CD8-positive, alpha-beta T cell (primary cell): ENCODE measurements at regions of chr18 and their contacts with region 1.

Region 1: DNA sequence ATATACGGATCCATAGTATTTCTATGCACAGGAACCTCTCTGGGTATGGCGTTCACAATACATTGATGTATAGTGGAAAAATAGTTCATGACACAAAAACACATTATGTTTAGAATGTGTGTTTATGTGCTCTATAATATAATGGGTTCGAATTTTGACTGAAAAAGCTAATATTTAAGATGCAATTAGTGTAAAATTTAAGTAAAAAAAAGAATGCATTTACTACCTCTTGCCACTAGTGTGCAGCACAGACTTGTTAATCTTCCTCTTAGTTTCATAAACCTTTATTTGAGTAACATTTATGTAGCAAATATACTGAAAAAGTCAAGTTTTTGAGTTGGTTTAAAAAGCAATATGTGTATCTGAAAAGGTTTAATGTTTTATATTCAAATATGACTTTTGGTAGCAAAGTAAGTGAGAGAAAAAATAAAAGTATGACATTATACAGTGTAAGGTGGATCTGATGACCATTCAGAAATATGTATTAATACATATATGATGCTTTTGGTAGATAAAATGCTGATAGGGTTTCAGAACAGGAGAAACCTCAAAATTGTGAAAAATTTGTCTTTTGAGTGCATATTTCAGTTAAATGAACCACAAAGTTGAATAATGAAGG is 49.4 kb downstream of the CCDC102B start:
- DNase-seq: peak in 2 of 9 experiments; percentile 8 to 29
- ATAC-seq: no peak
- H3K4me3 ChIP-seq: no peak overlapping the region
- H3K4me3 Mint-ChIP-seq: no peak overlapping the region
- H3K27ac ChIP-seq: no peak overlapping the region
- H3K27ac Mint-ChIP-seq: no peak overlapping the region
- H3K4me1 ChIP-seq: no peaks in the 10 kb centered on the region
- H3K4me1 Mint-ChIP-seq: no peaks in the 10 kb centered on the region
- H3K27me3 ChIP-seq: no peaks in the 10 kb centered on the region
- H3K27me3 Mint-ChIP-seq: no peaks in the 10 kb centered on the region
- CTCF ChIP-seq: peak; percentile 70

Region 2: GRCh38 chr18:68865021-68865420 is 17.7 kb after region 1 on chr18:
- CTCF ChIA-PET with region 1: no interaction called
- POLR2A ChIA-PET with region 1: no interaction called
- intact Hi-C with region 1: no loop called
- DNase-seq: no peak
- ATAC-seq: no peak
- H3K4me3 ChIP-seq: no peak overlapping the region
- H3K4me3 Mint-ChIP-seq: no peak overlapping the region
- H3K27ac ChIP-seq: no peak overlapping the region
- H3K27ac Mint-ChIP-seq: no peak overlapping the region
- H3K4me1 ChIP-seq: no peaks in the 10 kb centered on the region
- H3K4me1 Mint-ChIP-seq: no peaks in the 10 kb centered on the region
- H3K27me3 ChIP-seq: no peaks in the 10 kb centered on the region
- H3K27me3 Mint-ChIP-seq: no peaks in the 10 kb centered on the region
- CTCF ChIP-seq: no peak

Region 3: GRCh38 chr18:70431203-70431624 is 1583.9 kb after region 1 on chr18:
- CTCF ChIA-PET with region 1: no interaction called
- POLR2A ChIA-PET with region 1: no interaction called
- intact Hi-C with region 1: loop called (anchors 5 kb)
- DNase-seq: no peak
- ATAC-seq: no peak
- H3K4me3 ChIP-seq: no peak overlapping the region
- H3K4me3 Mint-ChIP-seq: no peak overlapping the region
- H3K27ac ChIP-seq: no peak overlapping the region
- H3K27ac Mint-ChIP-seq: no peak overlapping the region
- H3K4me1 ChIP-seq: no peaks in the 10 kb centered on the region
- H3K4me1 Mint-ChIP-seq: no peaks in the 10 kb centered on the region
- H3K27me3 ChIP-seq: no peaks in the 10 kb centered on the region
- H3K27me3 Mint-ChIP-seq: no peaks in the 10 kb centered on the region
- CTCF ChIP-seq: no peak

Region 4: DNA sequence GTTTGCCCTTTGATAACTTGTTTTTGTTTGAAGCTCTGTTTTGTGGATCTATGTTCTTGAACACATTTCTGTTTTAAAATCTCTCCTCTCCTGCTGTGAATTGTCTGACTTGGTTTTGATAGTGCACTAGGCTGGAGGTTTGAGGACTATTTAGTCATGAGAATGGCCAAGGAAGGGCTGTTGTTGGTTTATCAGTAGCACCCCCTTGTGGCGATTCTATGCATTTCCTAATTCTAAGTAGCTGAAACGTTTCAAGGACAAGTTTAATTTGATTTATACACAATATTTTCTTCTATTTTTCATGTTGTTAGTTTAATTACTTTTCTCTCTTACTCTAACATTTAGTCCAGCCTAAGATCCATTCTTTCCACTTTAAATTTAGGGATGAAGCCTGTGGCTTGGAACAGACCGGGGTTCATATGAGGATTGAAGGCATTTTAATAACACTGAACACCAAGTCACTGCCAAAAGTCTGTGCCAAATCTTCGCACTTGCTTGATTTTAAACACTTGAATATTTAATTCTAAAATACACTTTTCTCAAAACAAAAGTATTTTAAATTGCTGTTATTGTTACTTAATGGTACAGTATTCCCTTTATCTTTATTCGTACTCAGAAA is 1607.5 kb after region 1 on chr18:
- CTCF ChIA-PET with region 1: no interaction called
- POLR2A ChIA-PET with region 1: no interaction called
- intact Hi-C with region 1: loop called in 1 of 2 experiments (anchors 2 kb)
- DNase-seq: peak in 4 of 9 experiments; percentile 17 to 59 (median 34)
- ATAC-seq: peak; percentile 51
- H3K4me3 ChIP-seq: no peak overlapping the region
- H3K4me3 Mint-ChIP-seq: no peak overlapping the region
- H3K27ac ChIP-seq: no peak overlapping the region
- H3K27ac Mint-ChIP-seq: no peak overlapping the region
- H3K4me1 ChIP-seq: no peaks in the 10 kb centered on the region
- H3K4me1 Mint-ChIP-seq: no peaks in the 10 kb centered on the region
- H3K27me3 ChIP-seq: no peaks in the 10 kb centered on the region
- H3K27me3 Mint-ChIP-seq: peaks cover 8% of the 10 kb centered on the region
- CTCF ChIP-seq: peak; percentile 63